Activated B cell treated with CpG ODN at 0.5 μM for 24 hours (primary cell): ENCODE measurements at regions of chr7 and their contacts with region 1.

Region 1: GRCh38 chr7:43674584-43675436 is 54.5 kb downstream of the COA1 start:
- DNase-seq: no peak
- ATAC-seq: no peak
- H3K4me3 Mint-ChIP-seq: no peak overlapping the region
- H3K27ac Mint-ChIP-seq: peak overlapping the region; percentile 30
- H3K4me1 Mint-ChIP-seq: peaks cover 72% of the 10 kb centered on the region
- H3K27me3 Mint-ChIP-seq: no peaks in the 10 kb centered on the region
- CTCF ChIP-seq: no peak

Region 2: DNA sequence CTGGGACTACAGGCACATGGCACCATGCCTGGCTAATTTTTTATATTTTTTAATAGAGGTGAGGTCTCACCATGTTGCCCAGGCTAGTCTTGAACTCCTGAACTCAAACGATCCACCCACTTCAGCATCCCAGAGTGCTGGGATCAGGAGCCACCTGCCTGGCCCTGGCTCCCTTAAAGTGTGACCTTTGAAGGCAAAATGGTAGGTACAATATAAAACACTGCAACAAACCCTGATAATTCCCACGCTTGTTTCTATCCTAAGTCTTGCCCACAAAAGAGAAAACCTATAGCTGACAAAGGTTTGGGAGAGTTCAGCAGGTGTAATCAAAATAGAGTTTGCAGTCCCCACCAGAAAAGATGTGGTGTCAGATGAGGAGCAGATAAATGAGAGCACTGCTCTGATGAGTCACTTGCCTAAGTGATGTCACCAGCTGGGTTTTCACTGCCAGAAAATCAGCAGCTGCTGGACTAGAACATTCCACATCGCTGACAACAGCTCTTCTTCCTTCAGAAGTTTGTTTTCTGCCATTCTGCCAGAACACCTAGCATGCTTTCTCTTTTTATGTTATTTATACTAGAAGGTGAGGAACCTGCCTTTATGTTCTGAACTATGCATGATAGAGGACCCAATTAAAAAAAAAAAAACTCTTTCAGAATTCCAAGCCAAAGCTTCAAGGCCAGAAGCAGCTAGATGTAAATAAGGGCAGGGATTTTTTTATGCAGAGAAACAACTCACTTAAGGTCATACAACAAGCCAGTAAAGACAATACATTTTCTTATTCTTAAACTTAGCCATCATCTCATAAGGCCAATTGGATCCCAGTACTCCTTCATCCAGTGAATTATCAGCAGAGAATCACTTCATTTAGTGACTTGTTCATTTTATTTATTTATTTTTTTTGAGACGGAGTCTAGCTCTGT is 1192.5 kb after region 1 on chr7:
- CTCF ChIA-PET with region 1: no interaction called
- POLR2A ChIA-PET with region 1: interaction called, 11 read pairs
- intact Hi-C with region 1: no loop called
- DNase-seq: no peak
- ATAC-seq: no peak
- H3K4me3 Mint-ChIP-seq: no peak overlapping the region
- H3K27ac Mint-ChIP-seq: no peak overlapping the region
- H3K4me1 Mint-ChIP-seq: peaks cover 2% of the 10 kb centered on the region
- H3K27me3 Mint-ChIP-seq: peaks cover 4% of the 10 kb centered on the region
- CTCF ChIP-seq: no peak